ENCODE measurements at regions of chr9 and their contacts with region 1.

Region 1: DNA sequence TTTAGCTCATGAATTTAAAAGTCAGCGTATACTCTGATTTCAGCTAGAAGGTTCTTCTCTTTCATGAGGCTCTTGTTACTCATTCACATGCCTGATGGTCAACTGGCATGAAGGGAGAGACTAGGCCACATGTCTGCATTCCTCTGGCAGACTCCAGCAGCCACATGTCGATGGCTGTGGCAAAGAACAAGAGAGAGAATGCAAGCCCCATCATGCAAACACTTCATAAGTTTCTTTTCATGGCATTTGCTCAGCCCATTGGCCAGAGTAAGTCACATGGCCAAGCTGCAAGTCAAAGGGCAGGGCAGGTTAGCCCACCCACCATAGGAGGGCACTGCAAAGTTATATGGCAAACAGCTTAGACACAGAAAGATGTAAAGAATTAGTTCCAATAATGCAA is 5.4 kb downstream of the KCNV2 start:
- DNase-seq: no peak
- H3K4me3 ChIP-seq: no peak overlapping the region
- H3K4me3 Mint-ChIP-seq: no peak overlapping the region
- H3K27ac Mint-ChIP-seq: no peak overlapping the region
- H3K4me1 ChIP-seq: peaks cover 26% of the 10 kb centered on the region
- H3K4me1 Mint-ChIP-seq: peaks cover 5% of the 10 kb centered on the region
- H3K27me3 ChIP-seq: no peaks in the 10 kb centered on the region
- H3K27me3 Mint-ChIP-seq: no peaks in the 10 kb centered on the region
- CTCF ChIP-seq: no peak

Region 2: GRCh38 chr9:2676466-2676865 is 46.2 kb before region 1 on chr9:
- CTCF ChIA-PET with region 1: no interaction called
- POLR2A ChIA-PET with region 1: no interaction called
- intact Hi-C with region 1: loop called (anchors 5 kb)
- DNase-seq: no peak
- H3K4me3 ChIP-seq: no peak overlapping the region
- H3K4me3 Mint-ChIP-seq: no peak overlapping the region
- H3K27ac Mint-ChIP-seq: no peak overlapping the region
- H3K4me1 ChIP-seq: no peaks in the 10 kb centered on the region
- H3K4me1 Mint-ChIP-seq: no peaks in the 10 kb centered on the region
- H3K27me3 ChIP-seq: no peaks in the 10 kb centered on the region
- H3K27me3 Mint-ChIP-seq: no peaks in the 10 kb centered on the region
- CTCF ChIP-seq: no peak

Measured in Caco-2 (cell line).